ENCODE measurements at regions of chr12 and their contacts with region 1.

Region 1: DNA sequence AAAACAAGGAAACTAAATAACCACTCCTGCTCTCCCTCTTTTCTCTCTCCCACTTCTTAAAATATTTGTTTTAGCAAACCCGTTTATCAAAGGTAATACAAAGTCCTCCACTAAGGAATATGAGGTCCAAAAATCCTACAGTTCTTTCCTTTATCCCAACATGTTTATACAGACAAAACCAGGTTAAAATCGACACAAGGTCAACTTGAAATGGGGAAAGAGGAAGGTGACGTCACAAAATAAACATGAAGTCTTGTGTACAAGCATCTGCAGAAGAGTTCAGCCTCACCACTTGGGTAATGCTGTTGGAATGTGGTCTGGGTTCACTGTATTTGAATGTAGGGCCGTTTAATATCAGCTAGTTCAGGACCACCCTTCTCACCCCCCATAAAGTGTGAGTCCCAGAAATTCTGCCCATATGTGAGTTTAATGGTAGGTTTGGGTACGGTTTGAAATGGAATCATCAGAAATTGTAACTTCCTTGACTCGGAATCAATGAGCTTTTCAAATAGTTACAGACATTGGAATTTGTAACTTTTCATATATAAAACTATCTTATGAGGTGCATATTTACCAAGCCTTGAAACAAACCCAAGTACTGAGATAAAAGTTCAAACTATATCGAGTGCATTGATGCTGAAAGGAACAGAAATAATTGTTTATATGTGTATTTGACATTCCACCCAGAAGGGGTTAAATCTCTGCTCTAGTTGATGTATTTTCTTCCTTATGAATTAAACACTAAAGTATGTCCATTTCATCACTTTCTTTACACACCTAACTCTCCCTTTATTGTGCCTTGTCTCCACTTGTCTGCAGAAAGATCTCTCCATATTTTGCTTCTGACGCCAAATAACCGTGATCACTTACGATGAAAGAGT is 120.1 kb upstream of the SLC38A2 start:
- DNase-seq: peak; percentile 88
- H3K4me3 Mint-ChIP-seq: peak overlapping the region; percentile 61
- H3K27ac Mint-ChIP-seq: peak overlapping the region; percentile 100
- H3K4me1 Mint-ChIP-seq: peaks cover 32% of the 10 kb centered on the region
- H3K27me3 Mint-ChIP-seq: no peaks in the 10 kb centered on the region
- CTCF ChIP-seq: no peak

Region 2: GRCh38 chr12:46364777-46365580 is 127.7 kb before region 1 on chr12:
- CTCF ChIA-PET with region 1: interaction called, 3 read pairs
- POLR2A ChIA-PET with region 1: interaction called, 42 read pairs
- intact Hi-C with region 1: no loop called
- DNase-seq: peak; percentile 85
- H3K4me3 Mint-ChIP-seq: peak overlapping the region; percentile 93
- H3K27ac Mint-ChIP-seq: no peak overlapping the region
- H3K4me1 Mint-ChIP-seq: peaks cover 24% of the 10 kb centered on the region
- H3K27me3 Mint-ChIP-seq: no peaks in the 10 kb centered on the region
- CTCF ChIP-seq: no peak

Region 3: GRCh38 chr12:46401662-46402061 is 91.0 kb before region 1 on chr12:
- CTCF ChIA-PET with region 1: no interaction called
- POLR2A ChIA-PET with region 1: interaction called, 11 read pairs
- intact Hi-C with region 1: no loop called
- DNase-seq: peak; percentile 49
- H3K4me3 Mint-ChIP-seq: no peak overlapping the region
- H3K27ac Mint-ChIP-seq: peak overlapping the region; percentile 86
- H3K4me1 Mint-ChIP-seq: peaks cover 48% of the 10 kb centered on the region
- H3K27me3 Mint-ChIP-seq: no peaks in the 10 kb centered on the region
- CTCF ChIP-seq: peak; percentile 19

Region 4: GRCh38 chr12:46473634-46474329 is 18.9 kb before region 1 on chr12:
- CTCF ChIA-PET with region 1: interaction called, 3 read pairs
- POLR2A ChIA-PET with region 1: interaction called, 29 read pairs
- intact Hi-C with region 1: no loop called
- DNase-seq: peak; percentile 89
- H3K4me3 Mint-ChIP-seq: peak overlapping the region; percentile 58
- H3K27ac Mint-ChIP-seq: peak overlapping the region; percentile 94
- H3K4me1 Mint-ChIP-seq: peaks cover 44% of the 10 kb centered on the region
- H3K27me3 Mint-ChIP-seq: no peaks in the 10 kb centered on the region
- CTCF ChIP-seq: no peak

Region 5: DNA sequence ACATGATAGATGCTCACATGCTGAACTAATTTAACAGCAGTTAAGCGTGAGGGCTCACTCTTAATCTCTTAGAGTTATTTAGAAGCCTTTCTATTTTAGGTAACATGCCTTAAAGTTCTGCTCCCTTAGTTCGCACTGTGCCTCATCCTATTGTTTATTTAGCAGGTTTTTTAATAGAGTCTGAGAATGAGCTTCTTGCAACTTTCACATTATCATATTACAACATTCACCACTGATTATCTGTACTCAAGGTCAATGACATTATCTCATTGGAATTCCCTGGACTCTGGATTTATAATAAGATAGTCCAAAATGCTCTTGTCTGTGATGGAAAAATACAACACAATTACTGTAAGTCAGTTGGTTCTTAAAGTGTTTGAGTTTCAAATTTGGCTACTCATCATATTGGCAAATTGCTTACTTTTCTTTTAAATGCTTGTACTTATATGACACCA is 63.4 kb after region 1 on chr12:
- CTCF ChIA-PET with region 1: interaction called, 3 read pairs
- POLR2A ChIA-PET with region 1: interaction called, 81 read pairs
- intact Hi-C with region 1: no loop called
- DNase-seq: peak; percentile 85
- H3K4me3 Mint-ChIP-seq: peak overlapping the region; percentile 17
- H3K27ac Mint-ChIP-seq: peak overlapping the region; percentile 68
- H3K4me1 Mint-ChIP-seq: peaks cover 73% of the 10 kb centered on the region
- H3K27me3 Mint-ChIP-seq: no peaks in the 10 kb centered on the region
- CTCF ChIP-seq: no peak

Region 6: DNA sequence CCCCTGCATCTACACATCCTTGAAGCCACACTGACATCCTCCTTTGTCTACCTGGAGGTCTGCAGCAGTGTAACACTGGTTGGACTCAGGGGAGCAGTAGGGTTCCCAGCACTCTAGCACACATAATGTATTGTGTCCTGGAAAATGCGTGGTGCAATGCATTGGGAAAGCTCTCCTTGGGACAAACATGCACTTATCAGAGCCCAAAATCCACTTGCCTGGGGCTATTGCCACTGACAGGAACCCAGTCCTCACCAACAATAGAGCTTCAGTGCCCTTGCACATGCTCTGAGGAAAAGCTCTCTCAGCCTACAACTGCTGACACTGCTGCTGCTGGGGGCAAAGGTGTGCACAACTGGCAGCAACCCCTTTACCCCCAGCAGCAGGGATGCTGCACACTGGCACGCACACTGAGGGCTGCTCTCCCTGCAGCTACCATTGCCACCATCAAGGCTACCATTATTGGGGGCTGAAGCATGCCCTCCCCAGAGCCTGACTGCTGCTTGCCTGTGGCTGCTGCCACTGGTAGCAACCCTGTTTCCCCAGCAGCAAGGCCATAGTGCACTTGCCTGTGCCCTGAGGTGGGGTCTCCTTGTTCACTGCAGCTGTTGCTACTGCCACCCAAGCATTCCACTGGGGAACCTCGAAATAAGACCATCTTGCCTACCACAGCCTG is 111.2 kb after region 1 on chr12:
- CTCF ChIA-PET with region 1: no interaction called
- POLR2A ChIA-PET with region 1: no interaction called
- intact Hi-C with region 1: no loop called
- DNase-seq: no peak
- H3K4me3 Mint-ChIP-seq: no peak overlapping the region
- H3K27ac Mint-ChIP-seq: no peak overlapping the region
- H3K4me1 Mint-ChIP-seq: no peaks in the 10 kb centered on the region
- H3K27me3 Mint-ChIP-seq: no peaks in the 10 kb centered on the region
- CTCF ChIP-seq: no peak

Region 7: DNA sequence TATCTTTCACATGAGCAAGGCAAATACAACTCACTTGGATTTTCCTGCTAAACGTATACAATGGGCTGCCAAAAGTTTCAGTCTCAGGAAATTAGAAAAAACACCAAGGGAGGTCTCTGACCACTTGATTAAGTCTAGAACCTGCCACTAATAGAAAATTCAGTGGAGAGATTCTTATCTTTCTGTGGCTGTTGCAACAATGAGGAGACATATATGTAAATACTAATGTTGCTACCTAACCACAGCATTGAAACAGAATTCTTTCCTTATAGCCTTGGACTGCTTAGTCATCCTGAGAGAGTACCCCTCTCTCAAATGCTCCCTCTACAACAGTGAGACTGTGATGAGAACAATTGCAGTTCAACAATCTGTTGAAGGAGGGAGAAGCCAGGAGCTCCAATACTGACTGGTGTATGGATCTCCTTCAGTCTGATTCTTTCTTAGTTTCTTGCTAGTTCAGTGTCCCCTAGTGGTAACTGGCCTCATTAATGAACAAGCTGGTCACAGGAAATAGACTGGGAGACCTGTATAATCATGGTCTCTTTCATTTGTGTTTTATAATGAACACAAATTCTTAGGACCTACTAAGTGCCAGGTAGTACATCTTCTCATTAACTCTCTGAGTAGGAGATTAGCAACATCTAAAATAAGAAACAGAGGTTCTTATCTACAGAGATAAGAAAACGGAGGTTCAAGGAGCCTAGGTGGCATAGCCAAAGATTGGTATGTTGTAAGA is 168.6 kb after region 1 on chr12:
- CTCF ChIA-PET with region 1: interaction called, 3 read pairs
- POLR2A ChIA-PET with region 1: interaction called, 10 read pairs
- intact Hi-C with region 1: loop called (anchors 2 kb)
- DNase-seq: peak; percentile 79
- H3K4me3 Mint-ChIP-seq: no peak overlapping the region
- H3K27ac Mint-ChIP-seq: peak overlapping the region; percentile 80
- H3K4me1 Mint-ChIP-seq: peaks cover 63% of the 10 kb centered on the region
- H3K27me3 Mint-ChIP-seq: no peaks in the 10 kb centered on the region
- CTCF ChIP-seq: peak; percentile 57

Region 8: DNA sequence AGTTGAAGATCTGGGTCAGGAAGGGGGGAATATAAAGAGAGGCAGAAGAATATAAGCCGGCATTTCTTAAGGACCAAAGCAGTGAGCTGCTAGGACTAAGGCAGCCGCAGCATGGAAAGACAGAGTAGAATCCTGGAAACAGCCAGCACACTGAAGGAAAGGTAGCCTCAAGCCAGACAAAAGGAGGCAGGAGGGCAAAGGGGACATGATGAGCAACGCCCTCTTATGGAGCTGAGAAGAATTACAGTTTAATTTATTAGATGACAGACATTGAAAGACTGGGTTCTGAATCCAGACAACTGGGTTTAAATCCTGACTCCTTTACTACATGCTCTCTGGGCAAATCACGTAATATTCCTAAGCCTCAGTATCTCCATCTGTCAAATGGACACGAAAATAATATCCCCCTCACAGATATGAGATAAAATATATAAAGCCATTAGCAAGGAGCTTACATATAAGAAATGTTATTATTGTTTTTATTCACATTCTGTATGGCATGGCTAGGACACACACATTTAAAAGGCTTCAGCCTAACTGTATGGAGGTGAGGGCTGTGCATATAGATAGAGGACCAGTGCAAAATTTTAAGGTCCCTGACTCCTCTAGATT is 578.6 kb after region 1 on chr12:
- CTCF ChIA-PET with region 1: no interaction called
- POLR2A ChIA-PET with region 1: no interaction called
- intact Hi-C with region 1: no loop called
- DNase-seq: peak; percentile 44
- H3K4me3 Mint-ChIP-seq: no peak overlapping the region
- H3K27ac Mint-ChIP-seq: no peak overlapping the region
- H3K4me1 Mint-ChIP-seq: peaks cover 18% of the 10 kb centered on the region
- H3K27me3 Mint-ChIP-seq: no peaks in the 10 kb centered on the region
- CTCF ChIP-seq: peak; percentile 29

Measured in MCF 10A (cell line).